A549 (cell line): ENCODE measurements at regions of chr14 and their contacts with region 1.

Region 1: GRCh38 chr14:31926123-31926522 is 151.0 kb upstream of the ARHGAP5 start:
- DNase-seq: peak; percentile 59 to 71
- ATAC-seq: no peak
- H3K4me3 ChIP-seq: no peak overlapping the region
- H3K27ac ChIP-seq: peak overlapping the region in 1 of 2 experiments; percentile 86; a peak in 4 of 6 replicates
- H3K4me1 ChIP-seq: peaks cover 45% of the 10 kb centered on the region
- CTCF ChIP-seq: peak; percentile 67
- EP300 ChIP-seq: no peak
- POLR2A ChIP-seq: no peak
- RAD21 ChIP-seq: peak; percentile 58 to 67

Region 2: GRCh38 chr14:31414190-31414833 is 511.8 kb before region 1 on chr14:
- CTCF ChIA-PET with region 1: no interaction called
- POLR2A ChIA-PET with region 1: no interaction called
- DNase-seq: peak in 1 of 2 experiments; percentile 13
- ATAC-seq: peak; percentile 70 to 80
- H3K4me3 ChIP-seq: no peak overlapping the region
- H3K27ac ChIP-seq: peak overlapping the region; percentile 10 to 44; a peak in 5 of 6 replicates
- H3K4me1 ChIP-seq: peaks cover 53% of the 10 kb centered on the region
- CTCF ChIP-seq: no peak
- EP300 ChIP-seq: no peak
- POLR2A ChIP-seq: no peak
- RAD21 ChIP-seq: no peak

Region 3: DNA sequence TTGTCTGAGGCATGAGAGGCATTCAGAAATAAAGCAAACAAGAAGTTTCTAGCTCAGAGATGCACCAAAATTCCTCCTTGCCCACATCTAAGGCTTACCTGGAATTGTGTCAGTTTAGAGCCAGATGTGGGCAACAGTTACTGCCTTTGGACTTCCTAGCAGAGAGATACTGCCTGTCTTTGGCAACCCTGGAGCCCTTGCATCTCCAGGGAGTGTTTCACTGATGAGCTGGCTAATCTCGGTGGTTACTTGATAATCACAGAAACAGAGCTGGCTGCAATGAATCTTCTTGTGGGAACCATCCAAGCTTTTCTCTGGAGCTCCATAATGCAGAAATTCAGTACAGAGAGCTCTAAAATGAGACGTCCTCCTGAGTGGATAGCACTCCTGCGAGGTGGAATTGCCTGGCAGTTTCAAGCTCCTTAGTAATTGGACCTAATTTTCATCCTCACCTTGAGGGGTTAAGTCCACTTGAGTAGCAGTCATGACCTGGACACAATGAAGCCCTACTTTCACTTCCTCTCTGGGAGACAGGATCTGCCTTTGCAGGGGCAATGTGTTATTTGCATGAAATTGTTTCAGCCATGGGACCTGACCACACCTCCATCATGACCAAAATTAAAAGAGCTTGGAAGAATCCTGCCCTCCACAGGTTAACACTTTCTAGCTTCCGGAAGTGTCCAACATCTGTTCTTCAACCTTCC is 42.1 kb after region 1 on chr14:
- CTCF ChIA-PET with region 1: interaction called, 11 read pairs
- POLR2A ChIA-PET with region 1: no interaction called
- DNase-seq: no peak
- ATAC-seq: peak; percentile 60 to 65; a peak in 4 of 6 replicates
- H3K4me3 ChIP-seq: no peak overlapping the region
- H3K27ac ChIP-seq: peak overlapping the region; percentile 77 to 78
- H3K4me1 ChIP-seq: peaks cover 49% of the 10 kb centered on the region
- CTCF ChIP-seq: no peak
- EP300 ChIP-seq: no peak
- POLR2A ChIP-seq: no peak
- RAD21 ChIP-seq: no peak

Region 4: GRCh38 chr14:32083789-32084188 is 157.7 kb after region 1 on chr14:
- CTCF ChIA-PET with region 1: no interaction called
- POLR2A ChIA-PET with region 1: no interaction called
- DNase-seq: peak in 1 of 2 experiments; percentile 17
- ATAC-seq: peak in 1 of 2 experiments; percentile 26; a peak in 3 of 6 replicates
- H3K4me3 ChIP-seq: no peak overlapping the region
- H3K27ac ChIP-seq: no peak overlapping the region
- H3K4me1 ChIP-seq: peaks cover 94% of the 10 kb centered on the region
- CTCF ChIP-seq: no peak
- EP300 ChIP-seq: no peak
- POLR2A ChIP-seq: no peak
- RAD21 ChIP-seq: no peak

Region 5: DNA sequence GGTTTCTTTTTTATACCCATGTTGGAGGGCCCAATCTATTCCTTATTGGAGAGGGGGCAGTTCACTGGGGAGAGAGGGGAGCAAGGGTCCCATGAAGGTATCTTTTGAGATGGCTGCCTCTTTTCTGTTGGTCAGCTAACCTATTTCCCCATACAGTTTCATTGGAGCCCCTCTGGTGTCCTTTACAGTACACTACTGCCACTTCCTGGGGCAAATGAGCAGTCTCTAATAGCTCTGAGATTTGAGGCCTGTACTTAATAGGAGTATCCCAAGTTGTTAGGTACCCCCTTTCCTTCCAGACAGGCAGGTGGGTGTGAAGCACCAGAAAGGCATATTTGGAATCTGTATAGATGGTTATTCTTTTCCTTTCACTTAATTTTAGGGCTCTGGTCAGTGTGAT is 318.3 kb after region 1 on chr14:
- CTCF ChIA-PET with region 1: interaction called, 10 read pairs
- POLR2A ChIA-PET with region 1: no interaction called
- DNase-seq: peak in 1 of 2 experiments; percentile 30
- ATAC-seq: peak; percentile 68 to 81; a peak in 5 of 6 replicates
- H3K4me3 ChIP-seq: no peak overlapping the region
- H3K27ac ChIP-seq: no peak overlapping the region
- H3K4me1 ChIP-seq: no peaks in the 10 kb centered on the region
- CTCF ChIP-seq: peak; percentile 27; the same call in 2 of the 3 replicates
- EP300 ChIP-seq: no peak
- POLR2A ChIP-seq: no peak
- RAD21 ChIP-seq: peak; percentile 55 to 63